ENCODE measurements at regions of chr14 and their contacts with region 1.

Region 1: DNA sequence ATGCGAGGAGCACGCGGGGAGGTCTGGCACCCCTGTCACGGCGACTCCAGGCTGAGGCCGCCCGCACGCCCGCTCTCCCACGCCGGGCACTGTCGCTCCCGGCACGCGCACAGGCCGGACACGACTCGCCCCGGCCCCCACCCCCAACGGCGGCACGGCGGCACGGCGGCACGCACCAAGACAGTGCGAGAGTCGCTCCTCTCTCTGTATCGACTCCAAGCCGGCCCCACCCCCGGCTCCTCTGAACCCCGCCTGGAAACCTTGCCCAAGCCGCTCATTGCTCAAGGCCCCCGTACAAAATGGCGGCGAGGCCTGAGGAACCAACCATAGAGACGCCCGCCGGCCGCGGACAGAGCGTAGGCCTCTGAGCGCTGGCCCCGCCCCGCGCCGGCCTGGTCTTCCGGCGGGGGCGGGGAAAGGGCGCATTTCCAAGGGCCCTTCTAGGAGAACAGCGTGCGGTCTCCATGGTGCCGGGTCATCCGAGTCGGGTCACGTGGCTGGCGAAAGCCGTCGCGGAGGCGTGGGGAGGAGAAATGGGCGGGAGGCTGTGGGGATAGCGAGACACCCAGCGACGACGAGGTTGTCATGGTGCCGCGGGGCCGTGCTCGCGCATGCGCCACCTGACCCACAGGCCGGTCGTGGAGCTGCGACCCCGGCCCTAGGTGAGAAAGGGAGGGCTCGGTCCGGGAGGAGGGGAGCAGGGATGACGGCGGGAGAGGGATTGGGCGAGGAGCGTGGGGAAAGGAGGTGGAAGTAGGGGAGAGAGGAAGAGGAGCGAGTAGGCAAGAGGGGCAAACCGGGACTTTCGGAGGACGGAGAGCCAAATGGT is at the start of gene CIPC:
- DNase-seq: peak; percentile 88
- H3K4me3 ChIP-seq: peak within 1 kb of the TSS; percentile 100
- CTCF ChIP-seq: no peak

Region 2: GRCh38 chr14:76882651-76883050 is 215.3 kb before region 1 on chr14:
- CTCF ChIA-PET with region 1: interaction called, 442 read pairs
- POLR2A ChIA-PET with region 1: no interaction called
- DNase-seq: no peak
- H3K4me3 ChIP-seq: no peak overlapping the region
- CTCF ChIP-seq: no peak

Region 3: GRCh38 chr14:77086017-77086736 is 11.7 kb before region 1 on chr14:
- CTCF ChIA-PET with region 1: interaction called, 464 read pairs
- POLR2A ChIA-PET with region 1: no interaction called
- DNase-seq: no peak
- H3K4me3 ChIP-seq: no peak overlapping the region
- CTCF ChIP-seq: no peak

Region 4: GRCh38 chr14:77111043-77111442 is 13.1 kb after region 1 on chr14:
- CTCF ChIA-PET with region 1: interaction called, 16 read pairs
- POLR2A ChIA-PET with region 1: no interaction called
- DNase-seq: no peak
- H3K4me3 ChIP-seq: no peak overlapping the region
- CTCF ChIP-seq: no peak

Region 5: GRCh38 chr14:77124345-77125280 is 26.7 kb after region 1 on chr14:
- CTCF ChIA-PET with region 1: interaction called, 16 read pairs
- POLR2A ChIA-PET with region 1: no interaction called
- DNase-seq: no peak
- H3K4me3 ChIP-seq: peak overlapping the region; percentile 58
- CTCF ChIP-seq: peak; percentile 16

Region 6: DNA sequence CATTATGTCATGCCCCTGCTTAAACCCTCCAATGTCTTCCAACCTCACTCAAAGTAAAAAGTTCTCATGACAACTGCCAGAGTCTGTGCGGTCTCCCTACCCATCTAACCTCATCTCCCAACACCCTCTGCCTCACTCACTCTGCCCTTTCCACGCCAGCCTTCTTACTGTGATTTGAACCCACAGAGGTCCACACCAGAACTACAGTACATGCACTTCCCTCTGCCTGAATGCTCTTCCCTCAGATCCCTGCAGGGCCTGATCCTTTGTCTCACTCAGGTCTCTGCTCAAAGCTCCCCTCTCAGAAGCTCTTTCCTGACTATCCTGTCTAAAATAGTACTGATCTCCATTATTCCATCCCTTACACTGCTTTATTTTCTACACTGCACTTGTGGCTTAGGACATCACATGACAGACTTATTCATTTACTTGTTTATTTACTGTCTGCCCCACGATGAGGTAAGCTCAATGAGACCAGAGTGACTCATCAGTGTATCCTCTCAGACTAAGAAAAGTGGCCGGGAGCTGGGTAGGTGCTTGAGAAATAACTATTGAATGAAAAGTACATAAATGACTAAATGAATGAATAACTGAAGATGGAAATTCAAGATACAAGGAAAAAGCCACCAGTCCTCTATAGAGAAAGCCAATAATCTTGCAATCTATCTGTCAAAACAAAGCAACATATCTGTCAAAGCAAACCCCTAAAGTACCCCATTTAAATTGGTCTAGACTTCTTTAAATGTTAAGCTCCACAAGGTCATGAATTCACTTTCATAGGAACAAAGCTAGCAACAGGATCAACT is 205.7 kb after region 1 on chr14:
- CTCF ChIA-PET with region 1: no interaction called
- POLR2A ChIA-PET with region 1: no interaction called
- DNase-seq: peak; percentile 91
- H3K4me3 ChIP-seq: no peak overlapping the region
- CTCF ChIP-seq: no peak